Naive thymus-derived CD4-positive, alpha-beta T cell (primary cell): ENCODE measurements at regions of chr13 and their contacts with region 1.

Region 1: DNA sequence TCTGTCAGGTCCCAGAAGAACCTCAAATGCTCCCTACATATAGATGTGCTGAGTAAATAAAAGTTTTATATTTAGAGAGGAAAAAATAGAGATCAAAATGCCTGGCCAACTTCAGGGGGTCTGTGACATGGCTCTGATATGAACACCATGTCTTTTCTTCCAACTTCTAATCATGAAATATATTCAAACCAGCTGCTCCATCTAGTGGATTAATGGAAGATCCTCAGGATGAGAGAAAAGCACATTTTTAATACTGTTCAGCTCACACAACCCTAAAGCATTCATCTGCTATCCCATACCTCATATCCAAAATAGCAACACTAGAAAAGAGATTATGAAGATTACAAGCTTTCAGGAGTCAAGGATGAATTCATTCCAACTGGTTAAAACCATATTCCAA is 56.0 kb upstream of the DOCK9 start:
- DNase-seq: peak in 5 of 9 donors; percentile 33 to 53 (median 41)
- ATAC-seq: peak; percentile 69
- H3K4me3 ChIP-seq: no peak overlapping the region
- H3K4me3 Mint-ChIP-seq: peak overlapping the region in 2 of 10 donors; percentile 2
- H3K27ac ChIP-seq: no peak overlapping the region
- H3K27ac Mint-ChIP-seq: peak overlapping the region in 6 of 9 donors; percentile 0 to 81 (median 18)
- H3K4me1 ChIP-seq: peaks cover 0 to 15% of the 10 kb centered on the region in 2 donors
- H3K4me1 Mint-ChIP-seq: peaks cover 18 to 66% (median 59%) of the 10 kb centered on the region in 7 donors
- H3K27me3 ChIP-seq: no peaks in the 10 kb centered on the region
- H3K27me3 Mint-ChIP-seq: peaks cover 0 to 9% (median 0%) of the 10 kb centered on the region in 5 donors

Region 2: GRCh38 chr13:98098516-98098915 is 935.3 kb before region 1 on chr13:
- CTCF ChIA-PET with region 1: no interaction called
- POLR2A ChIA-PET with region 1: no interaction called
- intact Hi-C with region 1: no loop called
- DNase-seq: no peak
- ATAC-seq: no peak
- H3K4me3 ChIP-seq: no peak overlapping the region
- H3K4me3 Mint-ChIP-seq: no peak overlapping the region
- H3K27ac ChIP-seq: no peak overlapping the region
- H3K27ac Mint-ChIP-seq: no peak overlapping the region
- H3K4me1 ChIP-seq: no peaks in the 10 kb centered on the region
- H3K4me1 Mint-ChIP-seq: no peaks in the 10 kb centered on the region
- H3K27me3 ChIP-seq: no peaks in the 10 kb centered on the region
- H3K27me3 Mint-ChIP-seq: peaks cover 0 to 27% (median 20%) of the 10 kb centered on the region in 5 donors

Region 3: GRCh38 chr13:98842864-98843481 is 190.8 kb before region 1 on chr13:
- CTCF ChIA-PET with region 1: interaction called, 4 read pairs
- POLR2A ChIA-PET with region 1: no interaction called
- intact Hi-C with region 1: loop called in 1 of 2 experiments (anchors 1 kb)
- DNase-seq: peak; percentile 20 to 65 (median 48)
- ATAC-seq: peak; percentile 87
- H3K4me3 ChIP-seq: no peak overlapping the region
- H3K4me3 Mint-ChIP-seq: no peak overlapping the region
- H3K27ac ChIP-seq: no peak overlapping the region
- H3K27ac Mint-ChIP-seq: peak overlapping the region in 5 of 9 donors; percentile 13 to 60 (median 46)
- H3K4me1 ChIP-seq: no peaks in the 10 kb centered on the region
- H3K4me1 Mint-ChIP-seq: peaks cover 0 to 12% (median 9%) of the 10 kb centered on the region in 7 donors
- H3K27me3 ChIP-seq: no peaks in the 10 kb centered on the region
- H3K27me3 Mint-ChIP-seq: no peaks in the 10 kb centered on the region

Region 4: GRCh38 chr13:98910501-98910951 is 123.3 kb before region 1 on chr13:
- CTCF ChIA-PET with region 1: no interaction called
- POLR2A ChIA-PET with region 1: interaction called, 3 read pairs
- intact Hi-C with region 1: loop called in 1 of 2 experiments (anchors 5 kb)
- DNase-seq: peak in 8 of 9 donors; percentile 13 to 59 (median 50)
- ATAC-seq: peak; percentile 71
- H3K4me3 ChIP-seq: no peak overlapping the region
- H3K4me3 Mint-ChIP-seq: peak overlapping the region in 9 of 10 donors; percentile 5 to 82 (median 69)
- H3K27ac ChIP-seq: no peak overlapping the region
- H3K27ac Mint-ChIP-seq: peak overlapping the region; percentile 75 to 96 (median 90)
- H3K4me1 ChIP-seq: peaks cover 9 to 10% of the 10 kb centered on the region in 2 donors
- H3K4me1 Mint-ChIP-seq: peaks cover 12 to 53% (median 47%) of the 10 kb centered on the region in 7 donors
- H3K27me3 ChIP-seq: no peaks in the 10 kb centered on the region
- H3K27me3 Mint-ChIP-seq: no peaks in the 10 kb centered on the region

Region 5: GRCh38 chr13:99015606-99016490 is 18.0 kb before region 1 on chr13:
- CTCF ChIA-PET with region 1: interaction called, 3 read pairs
- POLR2A ChIA-PET with region 1: no interaction called
- intact Hi-C with region 1: loop called in 1 of 2 experiments (anchors 2 kb)
- DNase-seq: peak in 6 of 9 donors; percentile 44 to 64 (median 51)
- ATAC-seq: peak; percentile 78
- H3K4me3 ChIP-seq: no peak overlapping the region
- H3K4me3 Mint-ChIP-seq: peak overlapping the region in 9 of 10 donors; percentile 3 to 68 (median 59)
- H3K27ac ChIP-seq: no peak overlapping the region
- H3K27ac Mint-ChIP-seq: peak overlapping the region in 8 of 9 donors; percentile 11 to 92 (median 60)
- H3K4me1 ChIP-seq: peaks cover 13 to 27% of the 10 kb centered on the region in 2 donors
- H3K4me1 Mint-ChIP-seq: peaks cover 35 to 88% (median 78%) of the 10 kb centered on the region in 7 donors
- H3K27me3 ChIP-seq: no peaks in the 10 kb centered on the region
- H3K27me3 Mint-ChIP-seq: peaks cover 0 to 4% (median 0%) of the 10 kb centered on the region in 5 donors

Region 6: DNA sequence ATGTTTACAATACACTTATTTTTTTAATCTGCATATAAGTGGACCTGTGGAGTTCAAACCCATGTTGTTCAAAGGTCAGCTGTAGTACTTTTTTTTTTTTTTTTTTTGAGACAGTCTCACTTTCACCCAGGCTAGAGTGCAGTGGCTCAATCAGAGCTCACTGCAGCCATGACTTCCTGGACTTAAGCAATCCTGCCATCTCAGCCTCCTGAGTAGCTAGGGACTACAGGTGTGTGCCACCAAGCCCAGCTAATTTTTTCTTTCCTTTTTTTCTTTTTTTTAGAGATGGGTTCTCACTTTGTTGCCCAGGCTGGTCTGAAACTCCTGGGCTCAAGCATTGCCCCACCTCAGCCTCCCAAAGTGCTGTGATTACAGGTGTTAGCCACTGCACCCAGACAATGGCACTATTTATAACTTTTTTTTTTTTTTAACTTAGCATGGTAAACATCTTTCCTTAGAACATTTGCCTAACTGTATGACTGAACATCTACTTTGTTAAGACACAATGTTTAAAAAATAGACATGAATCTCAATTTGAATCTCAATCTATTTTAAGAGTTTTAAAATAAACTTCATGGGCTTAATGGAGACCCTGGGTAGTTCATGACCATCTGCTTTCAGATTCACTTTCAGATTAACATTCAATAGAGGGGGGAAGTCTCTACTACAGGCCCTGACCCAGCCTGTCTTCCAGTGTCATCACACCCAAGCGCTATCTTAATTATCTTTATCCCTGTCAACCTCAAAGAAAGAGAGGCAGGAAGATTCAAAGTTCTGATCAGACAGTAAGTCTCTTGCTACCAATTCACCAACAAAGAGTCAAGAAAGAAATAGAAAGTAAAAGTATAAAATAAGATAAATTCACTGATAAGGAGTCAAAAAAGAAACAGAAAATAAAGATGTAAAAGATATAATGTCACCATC is 41.7 kb after region 1 on chr13:
- CTCF ChIA-PET with region 1: interaction called, 10 read pairs
- POLR2A ChIA-PET with region 1: interaction called, 3 read pairs
- intact Hi-C with region 1: loop called in 1 of 2 experiments (anchors 1 kb)
- DNase-seq: peak in 7 of 9 donors; percentile 29 to 64 (median 55)
- ATAC-seq: peak; percentile 84
- H3K4me3 ChIP-seq: peak overlapping the region; percentile 11
- H3K4me3 Mint-ChIP-seq: peak overlapping the region; percentile 44 to 82 (median 64)
- H3K27ac ChIP-seq: peak overlapping the region; percentile 54
- H3K27ac Mint-ChIP-seq: peak overlapping the region; percentile 75 to 95 (median 89)
- H3K4me1 ChIP-seq: peaks cover 27 to 39% of the 10 kb centered on the region in 2 donors
- H3K4me1 Mint-ChIP-seq: peaks cover 40 to 92% (median 88%) of the 10 kb centered on the region in 7 donors
- H3K27me3 ChIP-seq: no peaks in the 10 kb centered on the region
- H3K27me3 Mint-ChIP-seq: no peaks in the 10 kb centered on the region